Dendritic cell treated with granulocyte-macrophage colony-stimulating factor and Interleukin-4, amounts not matched to agents 40 ng/mL and 50 ng/mL, for 4 days (primary cell): ENCODE measurements at regions of chr1 and their contacts with region 1.

Region 1: GRCh38 chr1:230167419-230167852 is 100.4 kb downstream of the GALNT2 start:
- H3K4me3 Mint-ChIP-seq: no peak overlapping the region
- H3K27ac Mint-ChIP-seq: no peak overlapping the region
- H3K4me1 Mint-ChIP-seq: peaks cover 44% of the 10 kb centered on the region
- H3K27me3 Mint-ChIP-seq: no peaks in the 10 kb centered on the region

Region 2: GRCh38 chr1:229661022-229661877 is 506.2 kb before region 1 on chr1:
- intact Hi-C with region 1: loop called (anchors 5 kb)
- H3K4me3 Mint-ChIP-seq: no peak overlapping the region
- H3K27ac Mint-ChIP-seq: no peak overlapping the region
- H3K4me1 Mint-ChIP-seq: peaks cover 6% of the 10 kb centered on the region
- H3K27me3 Mint-ChIP-seq: no peaks in the 10 kb centered on the region